ENCODE measurements at regions of chr3 and their contacts with region 1.

Region 1: DNA sequence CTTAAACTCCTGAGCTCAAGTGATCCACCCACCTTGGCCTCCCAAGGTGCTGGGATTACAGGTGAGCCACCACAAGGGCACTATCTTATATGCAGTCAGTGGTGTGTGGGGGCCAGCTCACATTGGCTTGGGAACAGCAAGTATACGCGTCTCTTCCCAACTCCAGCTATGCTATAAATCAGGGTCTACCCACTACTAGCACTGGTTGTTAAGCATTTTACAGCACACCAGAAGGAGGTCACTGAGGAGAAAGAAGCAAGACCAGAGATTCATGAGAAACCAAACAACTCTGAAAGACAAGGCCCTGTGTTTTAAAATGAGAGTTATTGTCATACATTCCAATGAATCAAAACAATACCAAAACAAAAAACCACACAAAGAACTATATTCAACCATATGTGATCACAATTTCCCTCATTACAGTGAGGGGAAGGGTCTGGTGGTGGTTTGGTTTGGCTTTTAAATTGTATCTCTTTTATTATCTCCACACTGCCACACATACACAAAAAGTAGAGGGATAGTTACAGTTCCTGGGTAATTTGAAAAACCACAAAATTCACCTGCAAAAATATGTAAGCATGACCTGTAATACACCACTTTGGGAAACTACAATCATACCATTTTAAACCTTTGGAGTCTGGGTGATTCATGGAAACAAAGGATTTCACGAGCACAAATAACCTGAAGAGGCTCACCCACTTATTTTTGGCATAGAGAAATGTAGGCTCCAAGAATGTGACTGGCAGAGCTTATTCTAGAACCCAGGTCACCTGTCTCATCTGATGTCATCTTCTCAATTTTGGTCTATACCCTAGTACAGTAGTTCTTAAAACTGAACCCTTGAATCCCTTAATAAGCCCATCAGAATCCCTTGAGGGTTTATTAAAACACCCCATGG is 5.2 kb downstream of the MAGI1 start:
- DNase-seq: no peak
- H3K4me3 Mint-ChIP-seq: no peak overlapping the region
- H3K27ac Mint-ChIP-seq: peak overlapping the region; percentile 51
- H3K4me1 Mint-ChIP-seq: peaks cover 13% of the 10 kb centered on the region
- H3K27me3 Mint-ChIP-seq: peaks cover 34% of the 10 kb centered on the region

Region 2: DNA sequence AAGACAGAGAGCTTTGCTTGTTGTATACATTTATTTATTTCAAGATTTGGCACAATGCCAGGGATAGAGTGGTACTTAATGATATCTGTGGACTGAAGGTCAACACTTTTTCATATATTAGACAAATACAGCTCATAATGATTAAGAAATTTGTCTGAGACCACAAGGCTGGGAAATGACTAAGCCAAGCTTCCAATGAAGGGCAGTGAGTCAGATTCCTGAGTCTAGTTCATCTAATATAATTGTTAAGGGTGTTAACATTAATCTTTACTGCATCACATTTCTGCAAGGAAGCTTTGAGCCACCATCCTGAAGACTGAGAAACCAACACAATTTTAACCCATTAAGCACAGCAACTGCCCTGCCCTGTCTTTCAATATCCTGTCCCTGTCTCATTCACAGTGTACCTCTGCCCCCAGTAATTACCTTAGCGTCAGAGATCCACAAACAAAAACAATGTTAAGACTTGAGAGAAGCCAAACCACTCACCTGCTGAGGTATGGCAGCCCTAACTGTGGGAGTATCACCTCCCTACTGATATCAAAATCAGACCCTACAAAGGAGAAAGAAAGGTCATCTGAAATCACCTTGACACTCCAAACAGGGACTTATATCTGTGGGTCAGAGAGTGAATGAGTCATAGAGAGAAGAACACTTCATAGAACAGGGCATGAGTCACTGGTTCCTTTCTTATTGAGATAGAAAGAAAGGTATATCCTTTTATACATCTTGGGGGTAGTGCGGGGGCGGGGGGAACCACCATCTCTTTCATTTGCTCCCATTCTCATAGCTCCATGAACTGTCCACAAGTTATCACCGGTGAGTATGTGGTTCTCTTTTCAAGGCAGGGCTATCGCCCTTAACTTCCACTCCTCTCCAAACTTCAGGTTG is 69.5 kb before region 1 on chr3:
- intact Hi-C with region 1: loop called (anchors 1 kb)
- DNase-seq: no peak
- H3K4me3 Mint-ChIP-seq: peak overlapping the region; percentile 40
- H3K27ac Mint-ChIP-seq: peak overlapping the region; percentile 57
- H3K4me1 Mint-ChIP-seq: peaks cover 13% of the 10 kb centered on the region
- H3K27me3 Mint-ChIP-seq: no peaks in the 10 kb centered on the region

Region 3: DNA sequence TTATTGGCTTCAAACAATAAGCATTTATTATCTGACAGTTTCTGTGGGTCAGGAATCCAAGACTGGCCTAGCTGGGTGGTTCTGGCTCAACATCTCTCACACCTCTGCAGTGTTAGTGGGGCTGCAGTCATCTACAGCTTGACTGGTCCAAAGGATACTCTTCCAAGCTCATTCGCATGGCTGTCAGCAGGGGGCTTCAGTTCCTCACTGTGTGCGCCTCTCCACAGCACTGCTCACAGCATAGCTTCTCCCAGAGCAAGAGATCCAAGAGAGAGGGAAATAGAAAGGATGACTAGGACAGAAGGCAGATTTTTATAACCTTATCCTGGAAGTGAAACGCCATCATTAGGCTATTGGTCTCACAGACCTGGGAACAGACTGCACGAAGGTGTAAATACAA is 59.0 kb before region 1 on chr3:
- intact Hi-C with region 1: no loop called
- DNase-seq: no peak
- H3K4me3 Mint-ChIP-seq: no peak overlapping the region
- H3K27ac Mint-ChIP-seq: no peak overlapping the region
- H3K4me1 Mint-ChIP-seq: no peaks in the 10 kb centered on the region
- H3K27me3 Mint-ChIP-seq: peaks cover 2% of the 10 kb centered on the region

Region 4: GRCh38 chr3:67940210-67940952 is 1906.9 kb after region 1 on chr3:
- intact Hi-C with region 1: no loop called
- DNase-seq: no peak
- H3K4me3 Mint-ChIP-seq: no peak overlapping the region
- H3K27ac Mint-ChIP-seq: no peak overlapping the region
- H3K4me1 Mint-ChIP-seq: no peaks in the 10 kb centered on the region
- H3K27me3 Mint-ChIP-seq: no peaks in the 10 kb centered on the region